Body of pancreas (tissue), 4 donors: ENCODE measurements at regions of chr19 and their contacts with region 1.

Region 1: GRCh38 chr19:12985049-12985776 is 10.1 kb upstream of the NFIX start:
- DNase-seq: peak; percentile 54 to 74 (median 72)
- ATAC-seq: peak; percentile 53
- H3K4me3 ChIP-seq: no peak overlapping the region
- H3K27ac ChIP-seq: peak overlapping the region in 3 of 4 donors; percentile 7 to 45 (median 28)
- H3K4me1 ChIP-seq: peaks cover 20% of the 10 kb centered on the region
- H3K27me3 ChIP-seq: no peaks in the 10 kb centered on the region
- CTCF ChIP-seq: peak in 1 of 7 experiments; percentile 6
- POLR2A ChIP-seq: peak in 1 of 3 donors; percentile 17

Region 2: GRCh38 chr19:13033819-13034611 is 48.8 kb after region 1 on chr19:
- intact Hi-C with region 1: loop called (anchors 5 kb)
- DNase-seq: peak; percentile 84 to 93 (median 89)
- ATAC-seq: peak; percentile 83
- H3K4me3 ChIP-seq: no peak overlapping the region
- H3K27ac ChIP-seq: peak overlapping the region; percentile 42 to 58 (median 48)
- H3K4me1 ChIP-seq: peaks cover 67% of the 10 kb centered on the region
- H3K27me3 ChIP-seq: no peaks in the 10 kb centered on the region
- CTCF ChIP-seq: peak; percentile 72 to 88 (median 86)
- POLR2A ChIP-seq: no peak

Region 3: DNA sequence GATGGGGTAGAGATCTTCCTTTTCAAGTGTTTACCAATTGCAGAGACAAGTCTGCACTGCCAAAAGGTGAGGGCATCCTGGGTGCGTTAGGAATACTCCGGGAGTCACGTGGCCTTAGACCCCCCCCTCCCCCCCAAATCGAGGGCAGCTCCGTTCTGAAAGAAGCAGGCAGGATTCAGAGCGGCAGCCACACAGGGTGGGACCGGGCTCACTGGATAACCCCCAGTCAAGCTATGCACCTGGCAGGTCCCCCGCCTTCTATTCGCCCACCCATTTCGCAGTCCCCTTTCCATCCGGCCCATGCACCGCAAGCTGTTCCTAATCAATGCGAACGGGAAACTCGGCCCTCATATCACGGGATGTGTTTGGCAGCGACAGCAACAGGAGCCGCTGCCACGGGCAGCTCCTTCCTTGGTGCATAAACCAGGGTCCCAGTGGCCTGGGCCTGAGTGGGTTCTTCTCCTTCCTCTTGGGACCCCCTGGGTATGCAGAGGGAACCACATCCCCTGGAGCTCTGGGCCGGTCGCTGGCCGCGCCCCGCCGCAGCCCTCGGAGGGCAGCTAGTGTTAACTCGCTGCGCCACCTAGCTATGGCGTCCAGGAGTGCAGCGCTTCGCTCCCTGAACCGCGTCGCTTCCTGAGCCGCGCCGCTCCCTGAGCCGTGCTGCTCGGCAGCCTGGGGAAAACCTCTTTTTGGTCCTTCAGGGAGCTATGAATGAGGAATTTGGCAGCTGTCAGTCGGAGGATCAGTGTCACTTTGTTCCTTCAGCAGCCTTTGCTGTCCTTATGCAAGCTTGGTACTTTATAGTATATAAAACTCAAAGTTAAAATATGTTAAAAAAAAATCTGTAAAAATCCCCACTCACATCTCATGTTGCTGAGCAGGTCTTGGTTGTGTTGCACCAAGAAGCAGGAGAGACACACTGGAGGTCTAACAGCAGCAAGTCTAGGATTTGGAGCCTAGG is 76.0 kb after region 1 on chr19:
- intact Hi-C with region 1: loop called (anchors 5 kb)
- DNase-seq: peak; percentile 82 to 90 (median 86)
- ATAC-seq: peak; percentile 89
- H3K4me3 ChIP-seq: no peak overlapping the region
- H3K27ac ChIP-seq: peak overlapping the region in 3 of 4 donors; percentile 64 to 86 (median 73)
- H3K4me1 ChIP-seq: peaks cover 52% of the 10 kb centered on the region
- H3K27me3 ChIP-seq: no peaks in the 10 kb centered on the region
- CTCF ChIP-seq: peak; percentile 91 to 96 (median 94)
- POLR2A ChIP-seq: peak in 2 of 3 donors; percentile 34 to 38

Region 4: DNA sequence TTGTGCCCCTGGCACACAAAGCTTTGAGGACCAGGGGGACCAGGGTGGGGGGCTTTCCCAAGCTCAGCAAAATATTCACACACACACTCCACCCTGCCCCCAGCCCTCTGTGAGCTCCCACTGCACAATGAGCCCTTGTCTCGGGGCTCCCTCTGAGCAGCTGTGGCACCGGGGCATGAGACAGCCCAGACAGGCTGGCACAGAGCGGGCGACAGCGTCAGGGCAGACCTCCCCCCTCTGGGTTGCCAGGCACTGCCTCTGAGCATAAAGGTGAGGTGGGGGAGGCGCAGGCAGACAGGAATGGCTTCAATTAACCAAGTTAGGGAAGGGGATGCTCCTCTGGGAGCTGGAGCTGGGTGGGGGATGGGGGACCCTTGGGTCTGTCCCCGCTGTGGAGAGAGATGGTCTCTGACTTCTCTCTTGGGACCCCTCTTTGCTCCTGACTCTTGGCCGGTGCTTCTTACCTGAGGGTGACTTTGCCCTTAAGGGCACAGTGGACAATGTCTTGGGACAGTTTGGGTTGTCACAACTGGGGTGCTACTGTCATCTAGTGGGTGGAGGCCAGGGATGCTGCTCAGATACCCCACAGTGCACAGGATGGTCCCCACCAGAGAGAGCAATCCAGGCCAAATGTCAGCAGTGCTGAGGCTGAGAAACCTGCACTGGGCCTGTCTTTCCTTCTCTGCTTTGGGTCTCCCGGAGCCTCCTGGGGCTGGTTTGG is 87.1 kb after region 1 on chr19:
- intact Hi-C with region 1: no loop called
- DNase-seq: peak in 1 of 4 donors; percentile 42
- ATAC-seq: no peak
- H3K4me3 ChIP-seq: no peak overlapping the region
- H3K27ac ChIP-seq: no peak overlapping the region
- H3K4me1 ChIP-seq: peaks cover 33% of the 10 kb centered on the region
- H3K27me3 ChIP-seq: no peaks in the 10 kb centered on the region
- CTCF ChIP-seq: no peak
- POLR2A ChIP-seq: no peak